ENCODE measurements at regions of chr12 and their contacts with region 1.

Region 1: GRCh38 chr12:124036674-124037109 is 63.7 kb downstream of the ZNF664 start:
- DNase-seq: no peak
- H3K4me3 ChIP-seq: no peak overlapping the region
- CTCF ChIP-seq: peak; percentile 65

Region 2: DNA sequence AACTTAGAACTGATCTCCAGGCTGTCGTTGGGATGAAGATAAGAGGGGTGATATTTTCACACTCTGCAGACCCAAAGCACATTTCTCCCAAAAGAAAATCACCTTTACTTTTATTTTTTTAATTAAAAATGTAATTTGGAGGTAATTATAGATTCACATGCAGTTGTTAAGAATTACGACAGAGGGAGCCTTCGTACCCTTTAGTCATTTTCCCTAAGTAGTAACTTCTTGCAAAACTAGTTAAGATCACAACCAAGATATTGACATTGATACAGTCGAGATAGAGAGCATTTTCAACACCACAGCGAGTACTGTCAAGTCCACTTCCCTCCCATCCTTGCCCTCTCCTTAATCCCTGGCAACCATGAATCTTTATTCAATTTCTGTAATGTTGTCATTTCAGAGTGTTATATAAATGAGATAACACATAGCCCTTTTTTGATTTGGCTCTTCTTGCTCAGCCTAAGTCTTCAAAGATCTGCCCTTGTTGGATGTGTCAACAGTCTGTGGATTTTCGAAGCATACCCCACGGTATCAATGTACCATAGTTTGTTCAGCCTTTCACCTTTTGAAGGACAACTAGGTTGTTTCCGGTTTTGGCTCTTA is 235.0 kb before region 1 on chr12:
- CTCF ChIA-PET with region 1: interaction called, 17 read pairs
- POLR2A ChIA-PET with region 1: no interaction called
- DNase-seq: no peak
- H3K4me3 ChIP-seq: no peak overlapping the region
- CTCF ChIP-seq: peak; percentile 37

Region 3: DNA sequence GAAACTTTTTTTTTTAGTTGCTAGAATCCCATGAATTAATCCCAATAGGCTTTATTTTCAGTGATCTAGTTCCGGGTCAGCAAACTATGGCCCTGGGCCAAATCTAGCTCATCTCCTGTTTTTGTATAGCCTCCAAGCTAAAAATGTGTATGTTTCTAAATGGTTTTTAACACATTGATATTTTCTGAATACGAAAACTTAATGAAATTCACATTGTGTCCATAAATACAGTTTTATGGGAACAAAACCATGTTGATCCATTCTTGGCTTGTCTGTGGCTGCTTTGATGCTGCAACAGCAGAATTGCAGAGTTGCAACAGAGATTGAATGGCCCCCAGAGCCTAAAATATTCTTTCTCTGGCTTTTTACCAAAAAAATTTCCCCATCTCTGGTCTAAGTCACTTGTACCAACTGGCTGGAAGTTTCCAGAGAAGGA is 16.2 kb before region 1 on chr12:
- CTCF ChIA-PET with region 1: interaction called, 21 read pairs
- POLR2A ChIA-PET with region 1: no interaction called
- DNase-seq: no peak
- H3K4me3 ChIP-seq: no peak overlapping the region
- CTCF ChIP-seq: no peak

Region 4: DNA sequence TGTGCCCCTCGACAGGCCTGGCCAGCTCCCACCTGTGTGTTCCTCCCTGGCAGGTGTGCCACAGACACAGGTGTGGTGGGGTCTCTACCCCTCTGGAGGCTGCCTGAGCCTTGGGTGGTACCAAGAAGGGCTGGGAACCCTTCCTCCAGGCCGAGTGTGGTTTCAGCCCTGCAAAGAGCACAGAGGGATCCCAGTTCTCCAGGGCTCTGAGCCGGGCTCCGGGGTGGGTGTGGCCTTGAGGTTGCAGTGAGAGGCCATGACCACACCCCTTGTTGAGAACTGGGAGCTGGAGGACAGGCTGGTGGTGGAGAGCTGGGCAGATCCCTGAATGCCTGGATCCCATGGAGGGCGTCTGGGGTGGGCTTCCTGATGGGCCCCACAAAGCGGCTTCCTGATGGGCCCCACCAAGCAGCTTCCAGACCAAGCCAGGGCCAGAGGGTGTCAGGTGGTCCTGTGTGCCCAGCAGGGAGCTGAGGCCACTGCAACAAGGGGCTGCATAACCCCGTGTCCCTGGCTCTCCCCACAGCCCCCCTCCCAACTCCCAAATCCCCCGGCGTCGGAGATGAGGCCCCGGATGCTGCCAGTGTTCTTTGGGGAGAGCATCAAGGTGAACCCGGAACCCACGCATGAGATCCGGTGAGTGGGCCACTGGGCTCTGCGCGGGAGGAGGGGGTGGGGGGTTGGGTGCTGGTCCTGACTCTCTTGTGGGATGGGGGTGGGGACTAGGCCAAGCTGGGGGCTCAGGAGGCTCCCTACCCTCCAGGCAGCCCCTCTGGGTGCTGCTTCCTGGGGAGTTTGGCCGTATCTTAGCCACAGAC is 274.8 kb after region 1 on chr12:
- CTCF ChIA-PET with region 1: interaction called, 28 read pairs
- POLR2A ChIA-PET with region 1: no interaction called
- DNase-seq: no peak
- H3K4me3 ChIP-seq: no peak overlapping the region
- CTCF ChIP-seq: no peak

Region 5: GRCh38 chr12:124332068-124332672 is 295.5 kb after region 1 on chr12:
- CTCF ChIA-PET with region 1: interaction called, 11 read pairs
- POLR2A ChIA-PET with region 1: no interaction called
- DNase-seq: no peak
- H3K4me3 ChIP-seq: no peak overlapping the region
- CTCF ChIP-seq: peak; percentile 31